Right cardiac atrium (tissue), 5 donors: ENCODE measurements at regions of chr6 and their contacts with region 1.

Region 1: GRCh38 chr6:1381481-1382330 is 7.7 kb upstream of the FOXF2 start:
- DNase-seq: peak in 2 of 3 donors; percentile 77 to 78
- ATAC-seq: peak; percentile 74 to 75
- H3K4me3 ChIP-seq: peak overlapping the region; percentile 48
- H3K27ac ChIP-seq: no peak overlapping the region
- H3K4me1 ChIP-seq: no peaks in the 10 kb centered on the region
- H3K27me3 ChIP-seq: peaks cover 2% of the 10 kb centered on the region

Region 2: GRCh38 chr6:797479-798077 is 584.1 kb before region 1 on chr6:
- intact Hi-C with region 1: loop called (anchors 2 to 5 kb)
- DNase-seq: peak in 1 of 3 donors; percentile 26
- ATAC-seq: peak; percentile 52 to 56
- H3K4me3 ChIP-seq: no peak overlapping the region
- H3K27ac ChIP-seq: no peak overlapping the region
- H3K4me1 ChIP-seq: no peaks in the 10 kb centered on the region
- H3K27me3 ChIP-seq: no peaks in the 10 kb centered on the region

Region 3: DNA sequence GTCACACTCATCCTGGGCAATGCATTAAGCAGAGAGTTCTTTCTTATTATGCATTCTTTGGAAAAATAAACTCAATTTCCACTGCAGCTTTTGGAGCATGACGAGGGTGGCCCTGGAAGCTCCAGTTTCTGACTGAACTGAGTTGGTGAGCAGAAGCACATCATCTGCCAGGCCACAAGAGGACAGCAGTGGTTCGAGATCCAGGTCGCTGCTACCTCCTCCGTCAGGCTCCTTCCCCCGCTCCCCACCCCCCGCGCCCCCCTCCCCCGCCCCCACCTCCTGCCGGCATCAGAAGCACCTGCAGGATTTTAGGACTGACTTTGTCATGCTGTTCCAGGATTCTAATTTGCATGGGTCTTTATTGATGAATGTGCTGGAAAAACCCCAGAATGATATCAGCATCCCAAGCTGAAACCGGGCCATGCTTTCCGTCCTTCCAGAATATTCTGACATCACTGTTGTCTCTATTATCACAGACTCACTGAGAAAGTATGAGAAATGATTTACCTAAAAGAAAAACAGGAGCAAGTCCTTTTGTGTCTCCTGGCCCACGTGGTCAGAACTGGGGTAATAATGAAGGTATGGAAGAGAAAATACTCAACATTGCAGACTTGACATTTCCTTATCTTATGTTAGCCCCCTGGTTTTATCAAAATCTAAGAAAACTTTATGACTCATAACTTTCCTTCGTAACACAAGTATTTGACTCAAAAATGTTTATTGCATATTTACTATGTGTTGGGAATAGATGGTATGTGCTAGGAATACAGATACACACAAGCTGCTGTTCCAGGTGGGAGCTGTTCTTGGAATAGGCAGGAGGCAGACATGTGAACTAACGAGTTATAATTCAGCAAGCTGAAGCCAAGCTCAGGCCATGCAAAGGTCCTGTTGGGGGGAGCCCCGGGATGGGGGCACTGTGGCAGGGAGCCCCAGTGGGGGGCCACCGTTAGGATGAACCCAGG is 468.6 kb before region 1 on chr6:
- intact Hi-C with region 1: loop called in 1 of 4 experiments (anchors 10 kb)
- DNase-seq: no peak
- ATAC-seq: no peak
- H3K4me3 ChIP-seq: no peak overlapping the region
- H3K27ac ChIP-seq: no peak overlapping the region
- H3K4me1 ChIP-seq: no peaks in the 10 kb centered on the region
- H3K27me3 ChIP-seq: no peaks in the 10 kb centered on the region

Region 4: DNA sequence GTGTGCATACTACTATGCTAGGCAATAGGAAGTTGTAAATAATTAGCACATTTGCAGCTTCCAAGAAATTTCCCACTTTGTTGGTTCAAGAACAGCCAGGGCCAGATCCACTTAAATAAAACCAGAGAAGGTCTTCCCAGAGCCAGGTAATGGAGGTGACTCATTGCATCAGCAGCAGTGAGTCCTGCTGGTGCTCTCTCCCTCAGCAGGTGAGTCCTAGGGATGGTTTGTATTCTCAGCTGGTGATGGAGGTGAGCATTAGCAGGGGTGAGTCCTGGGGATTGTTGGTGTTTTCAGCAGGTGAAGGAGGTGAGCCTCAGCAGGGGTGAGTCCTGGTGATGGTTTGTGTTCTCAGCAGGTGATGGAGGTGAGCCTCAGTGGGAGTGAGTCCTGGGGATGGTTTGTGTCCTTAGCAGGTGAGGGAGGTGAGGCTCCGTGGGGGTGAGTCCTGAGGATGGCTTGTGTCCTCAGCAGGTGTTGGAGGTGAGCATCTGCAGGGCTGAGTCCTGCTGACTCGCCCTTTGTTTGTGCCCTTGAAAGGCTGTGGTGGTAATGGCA is 456.0 kb before region 1 on chr6:
- intact Hi-C with region 1: loop called in 1 of 4 experiments (anchors 10 kb)
- DNase-seq: no peak
- ATAC-seq: no peak
- H3K4me3 ChIP-seq: no peak overlapping the region
- H3K27ac ChIP-seq: no peak overlapping the region
- H3K4me1 ChIP-seq: no peaks in the 10 kb centered on the region
- H3K27me3 ChIP-seq: no peaks in the 10 kb centered on the region

Region 5: DNA sequence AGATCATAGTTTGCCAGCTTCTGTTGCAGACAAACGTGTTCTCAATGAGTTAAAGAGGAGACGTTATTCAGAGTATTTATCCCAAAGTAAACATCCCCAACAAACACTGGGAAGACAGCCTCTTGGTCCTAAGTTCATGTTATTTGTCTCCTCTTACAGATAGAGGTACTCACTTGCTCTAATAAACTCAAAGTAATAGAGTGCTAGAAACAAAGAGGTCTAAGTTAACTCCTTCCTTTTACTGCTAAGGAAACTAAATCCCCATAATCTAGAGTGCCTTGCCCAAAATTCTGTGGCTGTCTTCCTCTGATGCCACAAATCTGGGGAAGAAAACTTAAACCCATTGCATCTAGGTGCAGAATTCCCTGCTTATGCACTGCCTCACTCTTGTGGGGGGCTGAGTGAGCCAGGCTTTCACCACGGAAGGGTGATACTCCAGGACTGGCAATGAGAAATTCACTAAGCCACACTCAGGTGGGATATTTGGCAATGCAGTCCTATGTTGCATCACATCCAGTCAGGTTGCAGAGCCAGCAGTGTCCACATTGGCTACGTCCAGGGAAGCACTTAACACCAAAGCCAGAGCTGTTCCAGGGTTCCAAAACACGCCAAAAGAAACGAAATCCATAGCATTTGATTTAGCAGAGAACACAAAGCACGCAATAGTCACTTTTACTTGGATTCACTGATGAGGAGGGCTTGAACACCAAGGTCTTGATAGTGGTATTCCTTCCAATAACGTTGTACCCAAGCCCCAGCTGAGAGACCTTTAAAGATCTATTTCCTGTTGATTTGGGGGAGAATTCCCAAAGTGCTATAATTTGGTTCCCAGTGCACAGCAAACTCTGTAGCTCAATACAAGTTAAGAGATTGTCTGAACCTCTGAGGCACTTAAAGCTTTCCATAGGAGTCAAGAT is 150.8 kb before region 1 on chr6:
- intact Hi-C with region 1: no loop called
- DNase-seq: no peak
- ATAC-seq: no peak
- H3K4me3 ChIP-seq: no peak overlapping the region
- H3K27ac ChIP-seq: no peak overlapping the region
- H3K4me1 ChIP-seq: no peaks in the 10 kb centered on the region
- H3K27me3 ChIP-seq: no peaks in the 10 kb centered on the region

Region 6: DNA sequence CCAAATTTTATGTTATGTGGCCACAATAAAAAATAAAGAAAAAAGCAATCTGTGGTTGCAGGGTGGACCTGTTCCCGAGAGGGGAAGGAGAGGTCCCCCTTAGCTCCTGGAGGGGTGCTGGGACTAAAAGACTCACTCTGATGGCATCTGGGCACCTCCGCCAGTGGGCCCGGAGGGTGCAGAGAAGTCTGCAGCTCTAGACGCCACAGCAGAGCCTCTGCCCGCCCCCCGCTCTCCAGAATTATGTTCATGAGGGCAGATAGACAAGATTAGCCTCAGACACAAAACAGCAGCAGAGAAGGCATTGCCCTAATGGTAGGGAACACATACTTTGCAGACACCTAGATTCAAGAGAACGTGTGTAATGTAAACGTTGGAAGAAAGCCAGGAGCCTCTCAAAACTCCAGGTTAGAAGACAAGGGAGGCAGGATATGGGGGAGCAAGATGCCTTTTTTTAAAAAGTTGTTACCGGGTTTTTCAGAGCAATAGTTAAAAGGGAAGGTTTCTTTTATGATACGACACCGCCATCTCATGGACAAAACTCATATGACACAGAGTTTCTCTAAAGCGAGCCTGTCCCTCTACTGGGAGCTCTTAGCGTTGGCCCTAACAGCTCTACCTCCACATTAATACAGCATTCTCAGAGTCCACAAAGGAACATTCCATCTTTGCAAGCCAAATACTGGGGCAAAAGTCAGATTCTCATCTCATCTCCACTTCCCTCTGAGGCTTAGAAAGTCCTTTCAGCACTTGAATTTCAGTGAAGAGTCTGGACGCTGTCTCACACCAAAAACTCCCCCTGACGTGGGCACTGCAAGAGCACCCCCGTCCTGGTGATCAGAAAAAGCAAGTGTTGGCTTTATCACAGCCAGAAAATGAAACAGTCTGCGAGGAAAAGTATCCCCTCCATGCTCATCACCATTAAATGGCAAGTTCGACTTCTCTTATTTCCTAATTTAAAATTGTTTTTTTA is 54.9 kb after region 1 on chr6:
- intact Hi-C with region 1: no loop called
- DNase-seq: no peak
- ATAC-seq: peak; percentile 64 to 70
- H3K4me3 ChIP-seq: no peak overlapping the region
- H3K27ac ChIP-seq: no peak overlapping the region
- H3K4me1 ChIP-seq: no peaks in the 10 kb centered on the region
- H3K27me3 ChIP-seq: peaks cover 3% of the 10 kb centered on the region

Region 7: DNA sequence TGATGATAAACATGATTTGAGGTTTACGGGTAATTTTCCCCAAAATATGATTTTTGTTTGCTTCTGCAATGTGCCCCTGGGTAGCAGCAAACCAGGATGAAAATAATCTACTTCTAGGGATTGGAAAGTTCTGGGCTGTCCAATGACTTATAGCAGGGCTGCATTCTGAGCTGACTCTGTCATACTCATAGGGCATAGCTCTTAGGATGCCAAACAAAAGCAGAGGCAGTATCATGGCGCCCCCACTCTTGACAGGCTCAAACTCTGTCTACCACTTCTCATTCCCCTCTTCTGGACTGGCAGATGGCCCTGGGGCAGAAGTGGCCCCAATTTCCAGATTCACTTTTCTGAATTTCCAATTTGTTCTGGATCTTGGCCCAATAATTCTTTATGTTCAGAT is 1449.7 kb after region 1 on chr6:
- intact Hi-C with region 1: no loop called
- DNase-seq: no peak
- ATAC-seq: no peak
- H3K4me3 ChIP-seq: no peak overlapping the region
- H3K27ac ChIP-seq: no peak overlapping the region
- H3K4me1 ChIP-seq: no peaks in the 10 kb centered on the region
- H3K27me3 ChIP-seq: no peaks in the 10 kb centered on the region